ENCODE measurements at regions of chr5 and their contacts with region 1.

Region 1: DNA sequence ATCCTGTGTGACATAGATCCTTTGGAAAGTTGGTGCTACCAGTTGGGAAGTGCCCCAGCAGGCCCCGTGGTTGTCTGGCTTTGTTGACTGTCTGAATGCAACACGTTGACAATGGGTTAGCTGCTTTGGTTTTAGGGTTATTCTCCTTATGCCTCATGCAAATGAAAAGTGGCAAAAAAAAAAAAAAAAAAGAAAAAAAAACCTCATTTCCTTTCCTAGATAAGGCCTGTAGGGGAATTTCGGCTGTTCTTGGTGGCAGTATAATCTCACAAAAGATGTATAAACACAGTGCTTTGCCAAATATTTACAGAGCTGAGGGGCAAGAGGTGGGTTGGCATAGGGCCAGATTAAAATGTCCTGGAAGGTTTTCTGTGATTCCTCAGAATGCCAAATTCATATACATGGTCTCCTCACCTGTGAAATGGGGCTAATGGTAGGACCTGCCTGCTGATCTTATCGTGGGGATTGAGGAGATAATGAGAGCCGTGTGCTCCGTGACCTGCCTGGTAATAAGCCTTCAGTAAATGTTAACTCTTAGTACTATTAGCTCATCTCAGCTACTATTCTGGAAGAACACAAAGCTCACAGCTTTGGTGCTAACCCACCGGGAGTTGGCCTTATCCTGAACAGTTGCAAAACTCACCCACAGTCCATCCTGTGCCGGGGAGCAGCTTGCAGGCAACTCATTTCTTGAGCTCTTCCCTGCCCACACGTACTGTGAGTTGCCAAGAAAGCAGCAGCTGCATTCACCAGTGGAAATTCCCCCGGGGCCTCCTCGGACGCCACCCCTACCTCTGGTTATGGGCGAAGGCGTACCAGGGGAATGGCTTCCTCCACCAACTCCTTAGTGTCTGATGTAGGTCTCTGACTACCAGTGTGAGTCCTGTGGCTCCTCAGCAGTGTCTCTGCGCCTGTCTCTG is 220.3 kb downstream of the NR3C1 start:
- DNase-seq: peak; percentile 33
- H3K4me3 Mint-ChIP-seq: peak overlapping the region; percentile 43
- H3K27ac Mint-ChIP-seq: peak overlapping the region; percentile 82
- H3K4me1 Mint-ChIP-seq: peaks cover 61% of the 10 kb centered on the region
- H3K27me3 Mint-ChIP-seq: no peaks in the 10 kb centered on the region

Region 2: DNA sequence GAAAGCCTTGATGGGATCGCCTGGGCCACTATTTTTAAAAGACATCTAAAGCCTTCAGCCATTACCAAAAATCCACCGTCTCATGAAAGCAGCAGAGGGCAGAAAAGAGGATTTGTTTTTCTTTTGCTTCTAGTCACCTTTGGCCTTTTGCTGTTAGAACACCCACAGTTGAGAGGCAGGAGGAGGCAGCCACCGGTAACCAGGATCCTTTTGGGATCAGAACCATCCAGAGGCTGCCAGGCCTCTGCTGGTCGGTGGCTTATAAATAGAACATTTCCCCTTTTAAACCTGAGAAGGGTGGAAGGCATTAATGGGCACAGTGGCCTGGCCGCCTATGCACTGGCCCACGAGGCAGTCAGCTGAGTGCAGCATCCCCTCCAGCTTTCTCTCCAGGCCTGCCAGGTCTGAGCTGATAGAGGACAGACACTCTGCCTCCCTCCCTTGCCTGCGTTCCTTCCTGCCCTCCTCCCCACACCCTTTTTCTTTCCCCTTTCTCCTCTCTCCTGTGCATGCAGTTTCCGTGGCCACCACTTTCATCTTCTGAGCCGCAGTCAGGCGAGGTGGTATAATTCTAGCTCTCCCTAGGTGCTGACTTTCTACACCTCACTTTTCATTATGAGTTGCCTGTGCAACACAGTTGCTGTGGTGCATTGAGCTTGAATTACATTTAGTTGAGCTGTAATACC is 159.6 kb before region 1 on chr5:
- intact Hi-C with region 1: loop called (anchors 5 kb)
- DNase-seq: peak; percentile 41
- H3K4me3 Mint-ChIP-seq: no peak overlapping the region
- H3K27ac Mint-ChIP-seq: peak overlapping the region; percentile 45
- H3K4me1 Mint-ChIP-seq: peaks cover 55% of the 10 kb centered on the region
- H3K27me3 Mint-ChIP-seq: no peaks in the 10 kb centered on the region

Region 3: GRCh38 chr5:143101121-143101520 is 82.0 kb before region 1 on chr5:
- intact Hi-C with region 1: loop called (anchors 1 kb)
- DNase-seq: no peak
- H3K4me3 Mint-ChIP-seq: peak overlapping the region; percentile 52
- H3K27ac Mint-ChIP-seq: peak overlapping the region; percentile 95
- H3K4me1 Mint-ChIP-seq: peaks cover 48% of the 10 kb centered on the region
- H3K27me3 Mint-ChIP-seq: no peaks in the 10 kb centered on the region

Region 4: GRCh38 chr5:143196601-143197259 is 13.6 kb after region 1 on chr5:
- intact Hi-C with region 1: loop called (anchors 2 kb)
- DNase-seq: no peak
- H3K4me3 Mint-ChIP-seq: no peak overlapping the region
- H3K27ac Mint-ChIP-seq: peak overlapping the region; percentile 67
- H3K4me1 Mint-ChIP-seq: peaks cover 15% of the 10 kb centered on the region
- H3K27me3 Mint-ChIP-seq: no peaks in the 10 kb centered on the region

Region 5: GRCh38 chr5:143222287-143223231 is 39.4 kb after region 1 on chr5:
- intact Hi-C with region 1: loop called (anchors 1 kb)
- DNase-seq: peak; percentile 74
- H3K4me3 Mint-ChIP-seq: peak overlapping the region; percentile 43
- H3K27ac Mint-ChIP-seq: peak overlapping the region; percentile 97
- H3K4me1 Mint-ChIP-seq: peaks cover 82% of the 10 kb centered on the region
- H3K27me3 Mint-ChIP-seq: no peaks in the 10 kb centered on the region

Measured in activated T-helper 2 cell treated with anti-CD3 and anti-CD28 coated beads, Interferon-gamma antibody, Interleukin-2, Interleukin-4, amounts not matched to agents 10 μg/mL and 5 μg/mL and 100 μg/mL, durations not matched to agents 14 hours and 24 hours and 36 hours (primary cell).